ENCODE measurements at regions of chr7 and their contacts with region 1.

Region 1: GRCh38 chr7:142796608-142797385 is 26.0 kb downstream of the PRSS2 start:
- DNase-seq: peak; percentile 41
- ATAC-seq: no peak
- H3K4me3 Mint-ChIP-seq: peak overlapping the region; percentile 99
- H3K27ac Mint-ChIP-seq: peak overlapping the region; percentile 99
- H3K4me1 Mint-ChIP-seq: peaks cover 59% of the 10 kb centered on the region
- H3K27me3 Mint-ChIP-seq: no peaks in the 10 kb centered on the region

Region 2: DNA sequence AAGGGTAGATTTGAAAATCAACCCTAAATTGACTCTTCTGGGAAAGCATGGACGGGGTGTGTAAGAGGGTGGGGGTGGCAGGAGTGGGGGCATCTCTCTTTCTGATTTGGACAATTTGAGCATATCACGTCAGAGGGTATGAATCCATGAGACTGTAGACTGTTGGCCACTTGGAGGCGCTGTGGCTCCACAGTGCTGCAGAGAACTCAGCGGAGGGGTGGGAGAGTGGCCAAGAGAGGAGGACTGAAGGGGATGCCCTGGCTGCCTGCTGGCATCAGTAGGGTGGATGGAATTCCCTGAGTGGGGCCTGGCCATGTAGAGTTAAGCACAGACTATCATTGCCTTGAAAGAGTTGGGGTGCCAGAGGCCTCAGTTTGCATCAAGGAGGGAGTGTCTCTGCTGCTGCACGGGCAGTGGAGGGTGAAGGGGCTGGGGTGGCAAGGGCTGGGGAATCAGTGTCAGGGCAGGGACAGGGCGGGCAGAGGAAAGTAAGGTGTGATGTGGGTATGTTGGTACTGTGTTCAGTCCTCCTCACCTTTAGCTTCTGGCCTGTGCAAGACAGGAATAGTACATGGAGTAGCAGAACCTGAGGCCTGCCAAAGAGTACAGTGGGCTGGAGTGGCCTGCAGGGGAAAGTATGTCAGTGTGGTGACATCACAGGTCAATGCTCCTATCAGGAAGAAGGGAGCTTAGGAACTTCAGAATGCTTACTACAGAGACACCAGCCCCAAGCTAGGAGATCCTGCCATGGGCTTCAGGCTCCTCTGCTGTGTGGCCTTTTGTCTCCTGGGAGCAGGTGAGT is 405.4 kb before region 1 on chr7:
- CTCF ChIA-PET with region 1: no interaction called
- POLR2A ChIA-PET with region 1: interaction called, 3 read pairs
- intact Hi-C with region 1: loop called in 1 of 2 experiments (anchors 5 kb)
- DNase-seq: peak; percentile 77
- ATAC-seq: peak; percentile 87
- H3K4me3 Mint-ChIP-seq: peak overlapping the region; percentile 53
- H3K27ac Mint-ChIP-seq: no peak overlapping the region
- H3K4me1 Mint-ChIP-seq: no peaks in the 10 kb centered on the region
- H3K27me3 Mint-ChIP-seq: no peaks in the 10 kb centered on the region

Region 3: DNA sequence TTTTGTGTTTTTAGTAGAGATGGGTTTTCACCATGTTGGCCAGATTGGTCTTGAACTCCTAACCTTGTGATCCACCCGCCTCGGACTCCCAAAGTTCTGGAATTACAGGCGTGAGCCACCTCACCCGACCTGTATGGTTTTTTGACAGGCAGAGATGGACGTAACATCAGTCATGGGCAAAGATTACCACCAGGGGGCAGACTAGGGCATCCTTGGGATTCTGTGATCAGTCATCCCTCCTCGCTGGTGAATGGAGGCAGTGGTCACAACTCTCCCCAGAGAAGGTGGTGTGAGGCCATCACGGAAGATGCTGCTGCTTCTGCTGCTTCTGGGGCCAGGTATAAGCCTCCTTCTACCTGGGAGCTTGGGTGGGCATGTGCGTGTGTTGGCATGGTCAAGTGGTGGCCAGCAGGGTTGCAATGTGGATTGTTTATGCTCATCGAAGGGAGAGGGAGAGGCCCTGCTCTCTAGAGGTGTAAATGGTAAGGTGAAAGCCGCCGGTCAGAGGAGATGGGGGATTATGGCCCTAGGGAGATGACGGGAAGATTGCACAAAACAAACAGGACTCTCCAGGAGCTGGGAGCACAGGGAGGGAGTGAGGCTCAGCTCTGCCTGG is 170.3 kb before region 1 on chr7:
- CTCF ChIA-PET with region 1: interaction called, 3 read pairs
- POLR2A ChIA-PET with region 1: no interaction called
- intact Hi-C with region 1: loop called in 1 of 2 experiments (anchors 5 kb)
- DNase-seq: peak; percentile 85
- ATAC-seq: peak; percentile 93
- H3K4me3 Mint-ChIP-seq: peak overlapping the region; percentile 73
- H3K27ac Mint-ChIP-seq: peak overlapping the region; percentile 90
- H3K4me1 Mint-ChIP-seq: peaks cover 5% of the 10 kb centered on the region
- H3K27me3 Mint-ChIP-seq: no peaks in the 10 kb centered on the region

Measured in activated CD4-positive, alpha-beta T cell treated with anti-CD3 and anti-CD28 coated beads for 36 hours (primary cell).